ENCODE measurements at regions of chr10 and their contacts with region 1.

Region 1: DNA sequence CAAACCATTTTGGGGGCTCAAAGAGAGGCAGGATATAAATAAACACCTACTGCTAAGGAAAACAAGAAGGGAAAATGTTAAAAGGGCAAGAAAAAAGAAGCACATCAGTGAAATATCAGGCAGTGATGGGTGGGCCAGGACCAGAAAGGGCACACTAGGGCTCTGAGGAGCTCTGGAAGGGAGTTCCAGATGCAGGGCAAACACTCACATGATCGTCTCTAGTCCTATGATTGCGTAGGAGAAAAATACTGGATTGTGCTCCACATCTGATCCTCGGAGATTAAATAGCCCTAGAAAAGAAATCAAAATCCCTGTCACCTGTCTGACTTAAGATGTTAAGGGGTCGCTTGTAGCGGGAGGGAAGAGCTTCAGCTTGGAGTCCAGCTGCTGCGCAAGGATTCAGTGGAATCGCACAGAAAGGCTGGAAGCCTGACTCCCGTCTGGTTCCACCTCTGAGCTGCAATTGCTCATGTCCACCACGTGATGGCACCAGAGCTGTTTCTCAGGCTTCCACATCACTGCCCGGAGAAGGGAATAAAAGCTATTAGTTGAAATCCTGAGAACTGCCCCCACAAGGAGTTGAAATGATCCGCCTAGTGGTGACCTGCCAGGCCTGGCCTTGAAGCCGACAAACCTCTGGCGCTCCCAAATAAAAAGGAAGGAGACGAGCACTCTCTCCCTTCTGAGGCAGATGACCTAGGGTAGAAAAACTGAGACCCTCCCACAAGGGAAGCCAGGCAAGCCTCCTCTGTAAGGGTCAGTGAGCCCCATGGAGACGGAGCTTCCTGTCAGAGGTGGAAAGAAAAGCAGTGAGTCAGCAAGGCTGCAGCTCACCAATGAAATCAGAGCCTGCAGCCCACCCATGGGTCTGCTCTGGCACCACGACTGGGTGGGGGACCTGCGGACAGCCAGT is 39.2 kb downstream of the XPNPEP1 start:
- DNase-seq: peak; percentile 85 to 91
- H3K4me3 ChIP-seq: no peak overlapping the region
- H3K4me1 ChIP-seq: peaks cover 3% of the 10 kb centered on the region; the same call in 1 of the 2 replicates
- H3K27me3 ChIP-seq: no peaks in the 10 kb centered on the region

Region 2: GRCh38 chr10:110273474-110273873 is 389.4 kb after region 1 on chr10:
- in situ Hi-C with region 1: loop called (anchors 25 kb)
- DNase-seq: no peak
- H3K4me3 ChIP-seq: no peak overlapping the region
- H3K4me1 ChIP-seq: no peaks in the 10 kb centered on the region
- H3K27me3 ChIP-seq: no peaks in the 10 kb centered on the region

Measured in HAP-1 (cell line).